Activated B cell treated with CpG ODN at 0.5 μM for 24 hours (primary cell): ENCODE measurements at regions of chr5 and their contacts with region 1.

Region 1: DNA sequence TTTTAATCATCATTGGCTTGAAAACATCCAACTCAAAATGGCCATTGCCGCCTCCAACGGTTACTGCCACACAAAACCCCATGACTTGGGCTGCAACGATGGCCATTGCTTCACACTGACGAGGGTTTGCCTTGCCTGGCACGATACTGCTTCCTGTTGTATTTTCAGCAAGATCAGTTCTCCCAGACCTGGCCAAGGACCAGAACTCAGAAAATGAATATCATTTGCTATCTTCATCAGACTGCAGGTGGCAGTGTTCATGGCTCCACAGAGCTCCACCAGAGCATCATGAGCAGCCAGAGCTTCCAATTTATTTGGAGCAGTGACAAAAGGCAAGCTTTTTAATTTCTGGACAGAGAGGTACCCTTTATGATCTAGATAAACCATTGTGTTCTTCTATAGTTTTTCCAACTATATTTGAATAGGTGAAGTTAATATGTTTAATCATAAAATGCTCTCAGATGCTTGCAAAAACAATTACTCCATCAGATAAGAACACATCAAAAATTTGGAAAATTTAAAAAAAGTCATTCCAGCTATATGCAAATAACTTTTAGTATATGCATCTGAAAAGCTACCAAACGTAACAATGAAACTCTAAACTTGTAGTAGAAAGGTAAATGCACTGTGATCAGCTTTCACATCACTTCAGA is 10.4 kb downstream of the AMACR start:
- DNase-seq: no peak
- ATAC-seq: peak; percentile 40
- H3K4me3 Mint-ChIP-seq: no peak overlapping the region
- H3K27ac Mint-ChIP-seq: no peak overlapping the region
- H3K4me1 Mint-ChIP-seq: no peaks in the 10 kb centered on the region
- H3K27me3 Mint-ChIP-seq: no peaks in the 10 kb centered on the region
- CTCF ChIP-seq: no peak

Region 2: GRCh38 chr5:32916648-32917047 is 1080.8 kb before region 1 on chr5:
- CTCF ChIA-PET with region 1: no interaction called
- POLR2A ChIA-PET with region 1: no interaction called
- intact Hi-C with region 1: no loop called
- DNase-seq: no peak
- ATAC-seq: no peak
- H3K4me3 Mint-ChIP-seq: no peak overlapping the region
- H3K27ac Mint-ChIP-seq: no peak overlapping the region
- H3K4me1 Mint-ChIP-seq: no peaks in the 10 kb centered on the region
- H3K27me3 Mint-ChIP-seq: no peaks in the 10 kb centered on the region
- CTCF ChIP-seq: no peak

Region 3: GRCh38 chr5:33800241-33800950 is 197.1 kb before region 1 on chr5:
- CTCF ChIA-PET with region 1: no interaction called
- POLR2A ChIA-PET with region 1: no interaction called
- intact Hi-C with region 1: no loop called
- DNase-seq: no peak
- ATAC-seq: no peak
- H3K4me3 Mint-ChIP-seq: no peak overlapping the region
- H3K27ac Mint-ChIP-seq: no peak overlapping the region
- H3K4me1 Mint-ChIP-seq: no peaks in the 10 kb centered on the region
- H3K27me3 Mint-ChIP-seq: peaks cover 3% of the 10 kb centered on the region
- CTCF ChIP-seq: no peak

Region 4: GRCh38 chr5:34007621-34008600 is 10.5 kb after region 1 on chr5 and contains the start of gene AMACR:
- CTCF ChIA-PET with region 1: interaction called, 7 read pairs
- POLR2A ChIA-PET with region 1: no interaction called
- intact Hi-C with region 1: loop called (anchors 1 kb)
- DNase-seq: peak; percentile 90
- ATAC-seq: peak; percentile 92
- H3K4me3 Mint-ChIP-seq: peak within 1 kb of the TSS; percentile 95
- H3K27ac Mint-ChIP-seq: peak within 1 kb of the TSS; percentile 91
- H3K4me1 Mint-ChIP-seq: peaks cover 23% of the 10 kb centered on the region
- H3K27me3 Mint-ChIP-seq: no peaks in the 10 kb centered on the region
- CTCF ChIP-seq: no peak
- total RNA-seq, gene AMACR: 6.0 and 6.5 TPM in 2 replicates

Region 5: DNA sequence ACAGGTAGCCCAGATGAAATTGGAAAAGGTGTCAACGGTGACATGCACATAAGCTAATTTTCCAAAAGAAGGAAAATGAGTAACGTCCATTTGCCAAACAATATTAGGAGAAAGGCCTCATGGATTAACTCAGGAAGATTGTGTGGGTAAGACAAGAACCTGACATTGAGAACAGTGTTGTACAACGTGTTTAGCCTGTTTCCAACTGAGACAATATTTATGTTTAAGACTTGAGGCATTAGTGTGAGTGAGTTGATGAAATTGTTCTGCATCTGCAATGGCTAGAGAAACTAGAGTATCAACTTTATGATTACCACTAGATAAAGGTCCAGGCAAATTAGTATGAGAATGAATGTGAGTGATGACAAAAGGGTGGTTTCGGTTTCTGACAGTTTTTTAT is 467.4 kb after region 1 on chr5:
- CTCF ChIA-PET with region 1: interaction called, 12 read pairs
- POLR2A ChIA-PET with region 1: no interaction called
- intact Hi-C with region 1: no loop called
- DNase-seq: no peak
- ATAC-seq: no peak
- H3K4me3 Mint-ChIP-seq: no peak overlapping the region
- H3K27ac Mint-ChIP-seq: no peak overlapping the region
- H3K4me1 Mint-ChIP-seq: peaks cover 4% of the 10 kb centered on the region
- H3K27me3 Mint-ChIP-seq: no peaks in the 10 kb centered on the region
- CTCF ChIP-seq: no peak